ENCODE measurements at regions of chrX and their contacts with region 1.

Region 1: DNA sequence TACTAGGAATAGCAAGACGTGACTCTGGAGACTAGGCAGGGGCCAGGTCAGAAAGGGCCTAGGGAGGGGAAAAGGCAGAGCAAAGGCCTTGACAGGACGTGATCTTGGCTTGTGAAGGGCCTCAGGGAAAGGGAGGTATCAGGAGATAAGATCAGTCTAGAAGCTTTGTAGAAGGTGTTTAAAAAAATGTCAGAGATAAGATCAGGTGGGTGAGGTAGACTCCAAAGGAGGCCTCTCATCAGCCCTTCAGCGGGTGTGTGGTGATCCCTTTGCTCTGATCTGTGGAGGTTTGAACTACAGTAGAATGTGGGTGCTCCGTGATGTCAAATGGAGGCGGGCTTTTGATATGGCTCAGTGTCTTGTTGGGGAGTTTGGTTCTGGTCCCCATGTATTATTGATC is 78.8 kb upstream of the PRPS1 start:
- DNase-seq: no peak
- H3K4me3 ChIP-seq: no peak overlapping the region
- CTCF ChIP-seq: no peak

Region 2: DNA sequence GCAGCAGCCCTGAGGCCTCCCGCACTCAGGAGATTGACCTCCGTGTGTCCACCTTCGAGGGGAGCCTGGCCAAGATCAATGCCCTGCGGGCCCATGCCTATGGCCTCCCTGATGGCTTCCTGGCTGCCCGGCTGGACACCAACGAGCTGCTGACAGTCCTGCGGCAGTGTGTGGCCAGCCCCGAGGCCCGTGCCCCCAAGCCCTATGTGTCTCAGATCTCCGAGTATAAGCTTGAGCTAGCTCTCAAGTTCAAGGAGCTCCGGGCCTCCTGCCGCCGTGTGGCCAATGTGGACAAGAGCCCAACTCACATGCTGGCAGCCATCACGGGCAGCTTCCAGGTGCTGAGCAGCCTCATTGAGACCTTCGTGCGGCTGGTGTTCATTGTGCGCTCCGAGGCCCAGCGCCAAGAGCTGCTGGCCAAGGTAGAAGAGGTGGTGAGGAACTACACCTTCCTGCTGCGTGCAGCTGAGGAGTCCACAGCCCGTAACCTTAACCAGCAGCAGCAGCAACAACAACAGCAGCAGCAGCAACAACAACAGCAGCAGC is 53.3 kb after region 1 on chrX:
- in situ Hi-C with region 1: loop called (anchors 5 kb)
- DNase-seq: no peak
- H3K4me3 ChIP-seq: no peak overlapping the region
- CTCF ChIP-seq: no peak